ENCODE measurements at regions of chr17 and their contacts with region 1.

Region 1: GRCh38 chr17:28335201-28335955 is at the starts of genes IFT20 and TNFAIP1:
- DNase-seq: peak; percentile 99 to 100
- ATAC-seq: peak; percentile 97 to 98 (median 98)
- H3K4me3 ChIP-seq: peak within 1 kb of the TSS; percentile 86
- H3K27ac ChIP-seq: peak within 1 kb of the TSS; percentile 94
- H3K4me1 ChIP-seq: peaks cover 29% of the 10 kb centered on the region
- H3K27me3 ChIP-seq: no peaks in the 10 kb centered on the region
- CTCF ChIP-seq: no peak
- total RNA-seq, gene IFT20: 4.4 to 8.7 (median 5.4) TPM
- total RNA-seq, gene TNFAIP1: 23.3 to 32.6 (median 30.2) TPM

Region 2: DNA sequence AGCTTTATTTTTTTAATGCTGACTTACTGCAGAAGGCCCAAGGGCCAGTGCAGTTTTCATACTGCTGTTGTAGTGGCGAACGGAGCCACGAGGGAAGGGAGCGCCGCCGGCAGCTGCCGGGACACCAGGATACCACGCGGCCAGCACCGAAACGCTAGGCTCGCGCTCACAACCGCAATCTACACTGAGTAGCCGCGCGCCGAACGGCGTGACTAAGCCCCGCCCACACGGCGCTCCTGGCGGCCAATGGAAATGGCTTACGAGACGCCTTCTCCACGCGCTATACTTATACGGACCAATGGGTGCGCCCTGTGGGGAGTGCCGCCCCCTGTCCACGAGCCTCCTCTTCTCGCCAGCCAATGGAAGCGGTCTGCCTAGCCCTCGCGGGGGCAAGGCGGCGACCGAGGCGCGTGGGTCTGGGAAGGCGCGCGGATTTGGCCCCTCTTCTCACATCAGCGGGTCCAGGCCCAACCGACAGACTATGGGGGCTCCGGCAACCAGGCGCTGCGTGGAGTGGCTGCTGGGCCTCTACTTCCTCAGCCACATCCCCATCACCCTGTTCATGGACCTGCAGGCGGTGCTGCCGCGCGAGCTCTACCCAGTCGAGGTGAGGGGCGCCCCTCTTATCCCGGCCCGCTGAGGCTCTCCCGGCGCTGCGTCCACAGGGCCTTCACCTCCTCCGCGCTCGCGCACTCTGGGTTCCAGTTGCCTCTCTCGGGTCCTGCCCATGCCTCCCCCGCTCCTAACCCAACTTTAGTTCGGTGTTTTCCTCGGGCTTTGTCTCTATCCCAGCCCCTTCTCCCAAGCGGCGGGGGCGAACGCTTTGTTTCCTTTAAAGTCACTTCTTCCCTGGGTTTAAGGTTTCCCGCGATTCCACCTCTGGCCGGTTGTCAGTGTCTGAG is 16.4 kb before region 1 on chr17 and contains the start of gene TMEM97:
- intact Hi-C with region 1: loop called in 1 of 2 experiments (anchors 2 kb)
- DNase-seq: peak; percentile 97 to 98
- ATAC-seq: peak; percentile 99 to 100 (median 99)
- H3K4me3 ChIP-seq: peak within 1 kb of the TSS; percentile 82
- H3K27ac ChIP-seq: peak within 1 kb of the TSS; percentile 59
- H3K4me1 ChIP-seq: peaks cover 14% of the 10 kb centered on the region
- H3K27me3 ChIP-seq: no peaks in the 10 kb centered on the region
- CTCF ChIP-seq: no peak
- total RNA-seq, gene TMEM97: 3.9 to 13.5 (median 9.0) TPM

Region 3: DNA sequence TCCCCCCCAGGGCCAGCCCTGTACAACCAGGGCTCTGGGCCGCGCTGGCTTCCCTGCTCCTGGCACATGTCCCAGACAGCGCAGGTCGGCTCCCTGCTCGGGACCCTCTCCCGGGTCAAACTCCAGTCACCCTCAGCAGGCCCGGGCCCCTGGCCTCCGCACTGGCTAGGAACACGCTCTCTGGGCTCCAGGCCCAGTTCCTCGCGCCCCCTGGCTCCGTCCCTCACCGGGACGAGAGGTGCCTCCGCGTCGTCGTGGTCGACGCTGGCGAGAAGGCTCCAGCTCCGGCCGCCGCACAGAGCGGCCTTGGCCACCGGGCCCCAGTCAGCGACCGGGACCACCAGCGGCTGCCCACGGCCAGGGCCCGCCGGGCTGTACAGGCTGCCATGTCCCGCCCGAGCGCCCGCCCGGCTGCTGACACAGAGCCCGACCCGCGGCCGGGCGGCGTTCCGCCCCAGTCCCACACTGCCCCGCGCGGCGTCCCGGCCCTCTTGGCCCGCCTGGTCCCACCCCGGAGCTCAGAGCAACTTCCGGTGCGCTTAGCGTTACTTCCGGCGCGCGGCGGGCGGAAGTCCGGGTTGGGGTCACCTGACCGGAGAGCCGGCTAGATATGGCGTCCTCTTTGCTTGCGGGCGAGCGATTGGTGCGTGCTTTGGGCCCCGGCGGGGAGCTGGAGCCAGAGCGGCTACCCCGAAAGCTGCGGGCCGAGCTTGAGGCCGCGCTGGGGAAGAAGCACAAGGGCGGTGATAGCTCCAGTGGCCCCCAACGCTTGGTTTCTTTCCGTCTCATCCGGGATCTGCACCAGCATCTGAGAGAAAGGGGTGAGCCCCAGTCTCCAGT is 21.9 kb after region 1 on chr17 and contains the start of gene POLDIP2:
- intact Hi-C with region 1: loop called in 1 of 2 experiments (anchors 2 kb)
- DNase-seq: peak; percentile 96 to 98
- ATAC-seq: peak; percentile 99
- H3K4me3 ChIP-seq: peak within 1 kb of the TSS; percentile 100
- H3K27ac ChIP-seq: peak within 1 kb of the TSS; percentile 97
- H3K4me1 ChIP-seq: peaks cover 26% of the 10 kb centered on the region
- H3K27me3 ChIP-seq: no peaks in the 10 kb centered on the region
- CTCF ChIP-seq: no peak
- total RNA-seq, gene POLDIP2: 182 to 206 (median 190) TPM

Region 4: GRCh38 chr17:28494445-28495188 is 159.2 kb after region 1 on chr17:
- intact Hi-C with region 1: no loop called
- DNase-seq: peak; percentile 65 to 82
- ATAC-seq: peak; percentile 63 to 79 (median 74)
- H3K4me3 ChIP-seq: no peak overlapping the region
- H3K27ac ChIP-seq: no peak overlapping the region
- H3K4me1 ChIP-seq: no peaks in the 10 kb centered on the region
- H3K27me3 ChIP-seq: peaks cover 0 to 6% (median 0%) of the 10 kb centered on the region in 3 donors
- CTCF ChIP-seq: peak; percentile 75

Region 5: GRCh38 chr17:28763804-28764266 is 428.5 kb after region 1 on chr17:
- intact Hi-C with region 1: no loop called
- DNase-seq: peak; percentile 67 to 74
- ATAC-seq: peak; percentile 36 to 68 (median 51)
- H3K4me3 ChIP-seq: no peak overlapping the region
- H3K27ac ChIP-seq: no peak overlapping the region
- H3K4me1 ChIP-seq: peaks cover 13% of the 10 kb centered on the region
- H3K27me3 ChIP-seq: no peaks in the 10 kb centered on the region
- CTCF ChIP-seq: peak; percentile 96

Region 6: DNA sequence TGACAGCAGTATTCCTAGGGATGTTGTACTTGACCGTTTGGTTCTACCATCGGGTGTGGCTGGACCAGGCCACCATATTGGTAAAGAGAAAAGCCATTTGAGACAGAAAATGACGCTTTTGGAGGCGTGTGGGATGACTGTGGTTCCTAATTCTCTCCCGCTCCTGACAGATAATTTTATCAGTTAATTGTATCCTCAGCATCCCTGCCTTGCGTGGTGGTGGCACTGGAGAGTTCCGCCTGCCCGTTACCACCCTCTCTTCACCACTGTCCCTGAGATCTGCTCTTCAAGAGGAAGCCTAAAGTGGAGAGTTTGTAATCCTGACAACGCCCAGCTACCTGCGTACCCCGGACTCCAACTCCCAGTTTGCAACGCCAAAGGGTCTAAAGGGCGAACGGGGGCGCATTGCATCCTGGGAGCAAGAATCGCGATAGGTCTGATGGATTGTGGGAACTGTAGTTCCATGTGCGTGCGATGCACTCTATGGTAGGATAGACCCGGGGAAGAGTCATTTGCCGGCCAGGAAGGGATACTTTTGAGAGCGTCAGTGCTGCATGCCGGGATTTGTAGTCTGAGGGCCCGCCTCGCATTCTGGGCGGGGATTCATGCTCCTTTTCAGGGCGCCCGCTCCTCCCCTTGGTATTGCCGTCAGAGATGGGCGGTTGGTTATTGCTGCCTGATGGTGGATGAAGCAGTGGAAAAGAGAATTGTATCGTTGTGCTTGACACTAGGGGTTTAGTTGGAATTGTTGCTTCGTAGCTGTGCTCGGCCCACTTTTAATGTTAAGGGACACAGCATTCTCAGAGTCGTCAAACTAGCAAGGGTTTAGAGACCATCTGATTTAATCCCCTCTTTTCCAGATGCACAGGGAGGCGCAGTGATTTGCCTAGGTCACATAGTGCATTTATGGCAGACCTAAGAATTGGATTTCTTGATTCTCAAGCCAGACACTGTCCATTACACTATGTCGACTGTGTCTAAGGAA is 616.9 kb after region 1 on chr17:
- intact Hi-C with region 1: loop called in 1 of 2 experiments (anchors 5 kb)
- DNase-seq: peak; percentile 96 to 97
- ATAC-seq: peak; percentile 78 to 83 (median 80)
- H3K4me3 ChIP-seq: peak overlapping the region; percentile 72
- H3K27ac ChIP-seq: peak overlapping the region; percentile 98
- H3K4me1 ChIP-seq: peaks cover 20% of the 10 kb centered on the region
- H3K27me3 ChIP-seq: no peaks in the 10 kb centered on the region
- CTCF ChIP-seq: no peak